ENCODE measurements at regions of chr4 and their contacts with region 1.

Region 1: GRCh38 chr4:68271851-68272756 is 26.6 kb upstream of the TMPRSS11B start:
- DNase-seq: peak; percentile 25 to 77
- H3K4me3 ChIP-seq: no peak overlapping the region
- H3K4me1 ChIP-seq: peaks cover 20% of the 10 kb centered on the region
- H3K27me3 ChIP-seq: no peaks in the 10 kb centered on the region

Region 2: GRCh38 chr4:68810919-68811318 is 538.8 kb after region 1 on chr4:
- in situ Hi-C with region 1: no loop called
- DNase-seq: no peak
- H3K4me3 ChIP-seq: no peak overlapping the region
- H3K4me1 ChIP-seq: no peaks in the 10 kb centered on the region
- H3K27me3 ChIP-seq: no peaks in the 10 kb centered on the region

Region 3: DNA sequence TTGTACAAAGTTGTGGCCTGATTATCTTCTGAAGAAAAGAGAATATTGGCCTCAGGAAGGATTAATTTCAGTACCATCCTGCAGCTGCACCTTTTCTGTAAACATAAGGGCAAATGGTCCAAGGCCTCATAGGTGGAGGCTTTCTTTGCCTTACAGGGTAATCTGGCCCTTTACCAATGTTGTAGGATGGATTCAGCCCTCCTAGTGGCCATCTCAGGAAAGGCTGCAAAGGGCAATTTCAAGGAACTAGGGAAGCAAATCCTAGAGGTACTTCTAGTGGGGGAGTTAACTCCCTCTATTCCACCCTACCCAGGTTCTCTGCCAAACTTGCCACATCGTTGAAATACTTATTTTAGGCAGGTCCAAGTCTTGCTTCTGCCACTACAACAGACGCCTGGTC is 884.8 kb after region 1 on chr4:
- in situ Hi-C with region 1: loop called (anchors 25 kb)
- DNase-seq: peak; percentile 4 to 9
- H3K4me3 ChIP-seq: no peak overlapping the region
- H3K4me1 ChIP-seq: no peaks in the 10 kb centered on the region
- H3K27me3 ChIP-seq: no peaks in the 10 kb centered on the region

Measured in HAP-1 (cell line).